Mucosa of descending colon (tissue), 3 donors: ENCODE measurements at regions of chr10 and their contacts with region 1.

Region 1: DNA sequence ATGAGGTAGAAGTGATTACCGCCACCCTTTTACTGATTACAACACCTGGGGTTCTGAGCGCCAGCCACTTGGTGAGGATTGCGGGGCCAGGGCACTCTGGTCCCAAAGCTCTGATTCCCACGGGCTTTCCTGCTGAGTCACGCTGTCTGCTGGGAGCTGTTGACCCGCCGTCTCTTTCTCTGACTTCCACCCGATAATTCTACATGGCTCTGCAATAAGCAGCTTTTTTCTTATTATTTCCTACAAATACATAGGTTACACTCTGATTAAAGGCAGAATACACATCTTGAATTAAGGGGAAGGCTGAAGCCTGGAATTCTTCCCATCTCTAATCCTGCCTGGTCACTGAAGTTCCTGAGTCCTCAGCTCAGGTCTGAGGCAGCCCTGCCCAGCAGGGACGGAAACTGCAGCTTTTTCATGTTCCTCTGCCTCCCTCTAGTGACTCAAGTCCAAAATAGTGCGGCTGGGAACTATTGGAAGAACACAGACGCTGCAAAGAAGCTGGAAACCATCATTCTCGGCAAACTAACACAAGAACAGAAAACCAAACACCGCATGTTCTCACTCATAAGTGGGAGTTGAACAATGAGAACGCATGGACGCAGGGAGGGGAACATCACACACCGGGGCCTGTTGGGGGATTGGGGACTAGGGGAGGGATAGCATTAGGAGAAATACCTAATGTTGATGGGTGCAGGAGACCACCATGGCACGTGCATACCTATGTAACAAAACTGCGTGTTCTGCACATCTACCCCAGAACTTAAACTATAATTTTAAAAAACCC is 178.3 kb downstream of the PRKCQ start:
- DNase-seq: peak; percentile 59 to 80 (median 67)
- ATAC-seq: peak; percentile 98
- H3K4me3 ChIP-seq: no peak overlapping the region
- H3K4me1 ChIP-seq: peaks cover 5% of the 10 kb centered on the region
- CTCF ChIP-seq: peak; percentile 43

Region 2: GRCh38 chr10:6108603-6109443 is 292.9 kb before region 1 on chr10:
- intact Hi-C with region 1: loop called (anchors 5 to 10 kb)
- DNase-seq: peak in 1 of 3 donors; percentile 42
- ATAC-seq: peak; percentile 74
- H3K4me3 ChIP-seq: no peak overlapping the region
- H3K4me1 ChIP-seq: no peaks in the 10 kb centered on the region
- CTCF ChIP-seq: no peak

Region 3: DNA sequence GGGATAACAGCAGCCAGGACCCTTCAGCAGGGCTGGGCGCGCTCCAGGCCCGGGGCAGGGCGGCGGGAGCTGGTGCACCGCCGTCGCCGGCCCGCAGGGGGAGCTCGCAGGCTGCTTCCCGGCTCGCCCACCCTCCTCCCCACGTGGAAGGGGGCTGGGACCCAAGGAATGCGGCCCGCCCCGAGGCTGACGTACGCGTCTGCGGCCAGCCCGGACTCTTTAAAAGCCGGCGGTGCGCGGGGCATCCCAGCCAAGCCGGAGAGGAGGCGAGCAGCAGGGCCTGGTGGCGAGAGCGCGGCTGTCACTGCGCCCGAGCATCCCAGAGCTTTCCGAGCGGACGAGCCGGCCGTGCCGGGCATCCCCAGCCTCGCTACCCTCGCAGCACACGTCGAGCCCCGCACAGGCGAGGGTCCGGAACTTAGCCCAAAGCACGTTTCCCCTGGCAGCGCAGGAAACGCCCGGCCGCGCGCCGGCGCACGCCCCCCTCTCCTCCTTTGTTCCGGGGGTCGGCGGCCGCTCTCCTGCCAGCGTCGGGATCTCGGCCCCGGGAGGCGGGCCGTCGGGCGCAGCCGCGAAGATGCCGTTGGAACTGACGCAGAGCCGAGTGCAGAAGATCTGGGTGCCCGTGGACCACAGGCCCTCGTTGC is 198.9 kb before region 1 on chr10 and contains the start of gene PFKFB3:
- intact Hi-C with region 1: loop called (anchors 5 to 10 kb)
- DNase-seq: peak; percentile 93 to 95 (median 94)
- ATAC-seq: peak; percentile 92
- H3K4me3 ChIP-seq: peak within 1 kb of the TSS; percentile 28
- H3K4me1 ChIP-seq: peaks cover 31% of the 10 kb centered on the region
- CTCF ChIP-seq: peak; percentile 99
- total RNA-seq, gene PFKFB3: 19.3 to 39.0 (median 21.7) TPM

Region 4: DNA sequence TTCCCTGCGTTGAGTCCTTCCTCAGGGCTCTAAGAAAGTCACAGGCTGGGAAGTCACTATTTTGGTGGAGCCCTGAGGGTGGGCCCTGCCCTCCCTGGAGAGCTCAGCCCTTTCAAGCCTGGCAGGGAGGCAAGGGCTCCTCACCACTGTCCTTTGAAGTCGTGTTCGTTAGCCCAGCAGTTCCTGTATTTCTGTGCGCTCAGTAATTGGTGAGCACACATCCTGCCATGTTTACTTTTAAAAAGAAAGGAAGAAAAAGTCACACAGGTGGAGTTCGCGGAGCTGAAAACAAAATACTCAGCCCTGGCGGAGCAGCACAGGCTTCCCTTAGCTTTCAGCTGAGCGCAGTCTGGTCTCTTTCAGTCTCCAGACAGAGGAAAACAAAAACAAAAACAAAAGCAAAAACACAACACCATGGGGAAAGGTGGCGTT is 141.3 kb after region 1 on chr10:
- intact Hi-C with region 1: no loop called
- DNase-seq: no peak
- ATAC-seq: peak; percentile 73
- H3K4me3 ChIP-seq: no peak overlapping the region
- H3K4me1 ChIP-seq: no peaks in the 10 kb centered on the region
- CTCF ChIP-seq: no peak